Activated B cell treated with CpG ODN at 0.5 μM for 24 hours (primary cell): ENCODE measurements at regions of chr11 and their contacts with region 1.

Region 1: GRCh38 chr11:130861902-130862860 is 54.1 kb downstream of the SNX19 start:
- DNase-seq: peak; percentile 75
- ATAC-seq: peak; percentile 91
- H3K4me3 Mint-ChIP-seq: no peak overlapping the region
- H3K27ac Mint-ChIP-seq: no peak overlapping the region
- H3K4me1 Mint-ChIP-seq: peaks cover 10% of the 10 kb centered on the region
- H3K27me3 Mint-ChIP-seq: no peaks in the 10 kb centered on the region
- CTCF ChIP-seq: peak; percentile 98

Region 2: GRCh38 chr11:130213143-130213978 is 648.8 kb before region 1 on chr11:
- CTCF ChIA-PET with region 1: interaction called, 28 read pairs
- POLR2A ChIA-PET with region 1: interaction called, 3 read pairs
- intact Hi-C with region 1: loop called (anchors 1 kb)
- DNase-seq: peak; percentile 77
- ATAC-seq: peak; percentile 99
- H3K4me3 Mint-ChIP-seq: no peak overlapping the region
- H3K27ac Mint-ChIP-seq: no peak overlapping the region
- H3K4me1 Mint-ChIP-seq: peaks cover 6% of the 10 kb centered on the region
- H3K27me3 Mint-ChIP-seq: no peaks in the 10 kb centered on the region
- CTCF ChIP-seq: peak; percentile 73

Region 3: DNA sequence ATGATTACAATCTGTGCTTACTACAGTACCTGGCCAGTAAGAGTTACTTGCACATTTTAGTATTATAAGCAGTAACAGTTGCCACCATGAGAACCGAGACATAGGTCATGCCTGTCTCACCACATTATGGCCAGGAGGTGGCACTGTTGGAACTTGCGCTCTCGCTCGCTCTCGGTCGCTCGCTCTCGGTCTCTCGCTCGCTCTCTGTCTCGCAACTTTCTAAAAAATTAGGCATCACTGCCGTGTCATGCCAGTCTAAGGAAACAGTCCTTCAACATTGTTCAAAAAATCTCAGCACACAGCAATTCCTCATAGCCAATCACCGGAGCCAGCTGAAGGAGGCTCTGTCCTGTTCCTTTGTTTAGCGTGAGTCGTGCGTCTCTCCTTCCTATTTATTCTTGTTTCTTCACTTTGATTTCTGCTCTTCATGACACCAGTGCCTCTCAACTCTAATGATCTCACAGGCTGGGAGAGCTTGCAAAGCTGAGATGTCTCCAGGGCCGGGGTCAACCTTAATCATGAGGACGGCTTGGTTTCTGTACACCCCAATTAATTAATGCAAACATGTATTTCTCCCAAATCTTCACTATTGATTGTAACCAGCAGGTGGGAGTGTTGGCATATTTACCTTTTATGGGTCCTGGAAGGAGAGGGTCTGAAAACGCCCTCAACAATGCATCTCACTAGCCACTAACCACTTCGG is 427.5 kb before region 1 on chr11:
- CTCF ChIA-PET with region 1: interaction called, 118 read pairs
- POLR2A ChIA-PET with region 1: interaction called, 3 read pairs
- intact Hi-C with region 1: loop called (anchors 1 kb)
- DNase-seq: peak; percentile 39
- ATAC-seq: peak; percentile 84
- H3K4me3 Mint-ChIP-seq: no peak overlapping the region
- H3K27ac Mint-ChIP-seq: no peak overlapping the region
- H3K4me1 Mint-ChIP-seq: peaks cover 8% of the 10 kb centered on the region
- H3K27me3 Mint-ChIP-seq: peaks cover 32% of the 10 kb centered on the region
- CTCF ChIP-seq: peak; percentile 87

Region 4: DNA sequence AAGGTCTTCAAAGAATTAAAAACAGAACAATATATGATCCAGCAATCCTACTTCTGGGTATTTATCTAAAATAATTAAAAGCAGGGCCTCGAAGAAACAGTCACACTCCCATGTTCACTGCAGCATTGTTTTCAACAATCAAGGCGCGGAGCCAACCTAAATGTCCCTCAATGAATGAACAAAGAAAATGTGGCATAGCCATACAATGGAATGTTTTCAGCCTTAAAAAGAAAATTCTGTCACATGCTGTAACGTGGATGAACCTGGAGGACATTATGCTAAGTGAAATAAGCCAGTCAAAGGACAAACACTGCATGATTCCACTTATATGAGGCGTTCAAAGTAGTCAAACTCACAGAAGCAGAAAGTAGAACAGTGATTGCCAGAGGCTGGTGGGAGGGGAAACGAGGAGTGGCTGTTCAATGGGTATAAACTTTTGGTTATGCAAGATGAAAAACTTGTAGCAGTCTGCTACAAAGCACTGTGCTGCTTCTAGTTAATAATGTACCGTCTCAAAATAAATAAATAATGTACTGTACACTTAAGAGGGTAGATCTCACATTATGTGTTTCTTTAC is 12.9 kb after region 1 on chr11:
- CTCF ChIA-PET with region 1: interaction called, 10 read pairs
- POLR2A ChIA-PET with region 1: no interaction called
- intact Hi-C with region 1: no loop called
- DNase-seq: no peak
- ATAC-seq: no peak
- H3K4me3 Mint-ChIP-seq: no peak overlapping the region
- H3K27ac Mint-ChIP-seq: no peak overlapping the region
- H3K4me1 Mint-ChIP-seq: no peaks in the 10 kb centered on the region
- H3K27me3 Mint-ChIP-seq: no peaks in the 10 kb centered on the region
- CTCF ChIP-seq: no peak

Region 5: DNA sequence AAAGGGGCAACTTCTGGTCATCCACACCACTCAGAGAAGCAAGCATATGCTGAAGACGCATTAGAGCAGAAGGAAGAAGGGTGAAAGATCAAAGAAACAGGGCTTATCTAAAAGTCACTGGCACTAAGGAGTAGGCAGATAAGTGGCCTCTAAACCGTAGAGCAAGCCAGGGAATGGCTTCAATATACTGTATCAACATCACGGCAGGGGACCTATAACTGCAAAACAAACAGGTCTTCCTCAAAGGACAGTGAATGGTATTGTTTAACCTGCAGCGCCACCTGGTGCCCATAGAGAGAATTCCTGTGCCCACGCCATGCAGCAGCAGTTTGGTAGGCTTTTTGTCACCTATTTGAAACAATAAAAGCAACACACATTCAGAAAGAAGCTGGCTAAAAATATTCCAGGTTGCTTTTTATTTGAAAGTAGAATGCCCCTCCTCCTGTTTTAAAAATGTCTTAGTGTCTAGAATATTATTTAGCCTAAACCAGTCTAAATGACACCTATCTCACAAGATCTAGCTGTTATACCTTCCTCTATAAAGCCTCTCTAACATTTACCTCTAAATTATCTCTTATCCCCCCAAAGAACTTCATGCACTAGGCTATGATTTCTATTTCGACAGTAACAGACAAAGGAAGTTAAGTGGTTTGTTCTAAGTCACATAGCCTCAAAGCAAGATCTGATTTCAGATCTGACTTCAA is 32.3 kb after region 1 on chr11:
- CTCF ChIA-PET with region 1: interaction called, 17 read pairs
- POLR2A ChIA-PET with region 1: interaction called, 3 read pairs
- intact Hi-C with region 1: no loop called
- DNase-seq: peak; percentile 38
- ATAC-seq: peak; percentile 84
- H3K4me3 Mint-ChIP-seq: no peak overlapping the region
- H3K27ac Mint-ChIP-seq: no peak overlapping the region
- H3K4me1 Mint-ChIP-seq: no peaks in the 10 kb centered on the region
- H3K27me3 Mint-ChIP-seq: no peaks in the 10 kb centered on the region
- CTCF ChIP-seq: peak; percentile 61